Naive thymus-derived CD4-positive, alpha-beta T cell (primary cell): ENCODE measurements at regions of chr9 and their contacts with region 1.

Region 1: GRCh38 chr9:114405294-114406034 is 17.7 kb upstream of the AKNA start:
- DNase-seq: peak; percentile 56 to 84 (median 80)
- ATAC-seq: peak; percentile 97
- H3K4me3 ChIP-seq: no peak overlapping the region
- H3K4me3 Mint-ChIP-seq: no peak overlapping the region
- H3K27ac ChIP-seq: no peak overlapping the region
- H3K27ac Mint-ChIP-seq: peak overlapping the region in 6 of 9 donors; percentile 16 to 91 (median 60)
- H3K4me1 ChIP-seq: peaks cover 4 to 11% of the 10 kb centered on the region in 2 donors
- H3K4me1 Mint-ChIP-seq: peaks cover 6 to 10% (median 6%) of the 10 kb centered on the region in 7 donors
- H3K27me3 ChIP-seq: no peaks in the 10 kb centered on the region
- H3K27me3 Mint-ChIP-seq: no peaks in the 10 kb centered on the region

Region 2: GRCh38 chr9:114348906-114349482 is 56.5 kb before region 1 on chr9:
- CTCF ChIA-PET with region 1: no interaction called
- POLR2A ChIA-PET with region 1: interaction called, 978 read pairs
- intact Hi-C with region 1: no loop called
- DNase-seq: peak in 3 of 9 donors; percentile 18 to 83 (median 62)
- ATAC-seq: peak; percentile 85
- H3K4me3 ChIP-seq: no peak overlapping the region
- H3K4me3 Mint-ChIP-seq: peak overlapping the region in 8 of 10 donors; percentile 29 to 65 (median 50)
- H3K27ac ChIP-seq: peak overlapping the region; percentile 70
- H3K27ac Mint-ChIP-seq: peak overlapping the region; percentile 79 to 98 (median 90)
- H3K4me1 ChIP-seq: peaks cover 22 to 24% of the 10 kb centered on the region in 2 donors
- H3K4me1 Mint-ChIP-seq: peaks cover 23 to 60% (median 43%) of the 10 kb centered on the region in 7 donors
- H3K27me3 ChIP-seq: no peaks in the 10 kb centered on the region
- H3K27me3 Mint-ChIP-seq: no peaks in the 10 kb centered on the region

Region 3: DNA sequence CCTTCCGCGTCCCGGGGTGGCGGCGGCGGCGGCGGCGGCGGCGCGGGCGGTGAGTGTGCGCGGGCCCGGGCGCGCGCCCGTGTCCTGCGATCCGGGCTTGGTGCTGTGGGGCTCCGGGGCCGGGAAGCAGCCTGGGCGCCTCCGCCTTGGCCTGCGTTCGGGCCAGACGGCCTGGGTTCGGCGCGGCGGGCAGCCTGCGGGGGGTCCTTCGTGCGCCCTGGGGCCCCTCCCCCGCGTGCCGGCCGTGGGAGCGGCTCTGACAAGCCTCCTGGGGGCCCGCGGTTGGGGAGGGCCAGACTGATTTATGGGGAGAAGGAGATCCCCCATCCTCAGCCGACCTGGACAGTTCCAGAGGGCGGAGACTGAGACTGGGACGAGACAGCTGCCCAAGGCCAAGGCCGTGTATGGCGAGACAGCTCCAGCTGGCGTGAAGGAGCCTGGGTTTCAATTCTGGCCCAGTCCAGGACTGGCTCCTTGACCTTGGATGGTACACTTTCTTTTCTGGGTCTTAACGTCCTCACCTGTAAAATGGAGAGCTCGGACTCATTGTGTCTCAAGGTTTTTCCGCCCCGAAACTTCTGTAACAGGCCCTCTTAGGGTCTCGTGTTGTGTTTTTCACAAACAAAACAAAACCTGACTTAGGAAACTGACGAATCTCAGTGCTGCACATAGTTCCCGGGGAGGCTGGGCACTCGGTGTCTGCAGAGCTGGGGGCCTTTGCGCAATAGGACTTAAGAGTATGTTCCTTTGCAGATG is 206.2 kb after region 1 on chr9:
- CTCF ChIA-PET with region 1: interaction called, 6 read pairs
- POLR2A ChIA-PET with region 1: interaction called, 3 read pairs
- intact Hi-C with region 1: loop called in 1 of 2 experiments (anchors 1 kb)
- DNase-seq: peak in 5 of 9 donors; percentile 24 to 44 (median 31)
- ATAC-seq: peak; percentile 82
- H3K4me3 ChIP-seq: peak overlapping the region; percentile 85
- H3K4me3 Mint-ChIP-seq: peak overlapping the region; percentile 90 to 99 (median 92)
- H3K27ac ChIP-seq: peak overlapping the region; percentile 92
- H3K27ac Mint-ChIP-seq: peak overlapping the region; percentile 77 to 98 (median 95)
- H3K4me1 ChIP-seq: peaks cover 14 to 31% of the 10 kb centered on the region in 2 donors
- H3K4me1 Mint-ChIP-seq: peaks cover 34 to 63% (median 55%) of the 10 kb centered on the region in 7 donors
- H3K27me3 ChIP-seq: no peaks in the 10 kb centered on the region
- H3K27me3 Mint-ChIP-seq: no peaks in the 10 kb centered on the region

Region 4: DNA sequence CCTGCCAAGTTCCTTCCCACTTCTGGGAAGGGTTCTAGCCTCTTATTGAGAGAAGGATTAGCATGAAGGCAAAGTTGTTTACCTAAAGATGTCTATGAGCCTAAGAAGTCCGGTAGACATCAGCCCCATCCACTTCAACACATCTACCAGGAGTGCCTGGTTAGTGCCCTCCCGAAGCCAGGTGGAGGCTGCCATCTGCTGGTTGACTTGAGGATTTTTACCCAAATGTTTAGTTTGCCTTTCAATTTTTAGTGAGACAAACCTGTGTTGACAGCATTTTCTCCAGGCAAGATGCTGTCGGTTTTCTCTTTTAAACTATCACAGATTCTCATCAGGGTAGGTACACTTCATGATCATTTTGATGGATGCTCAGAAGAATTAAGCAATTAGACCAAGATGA is 608.5 kb after region 1 on chr9:
- CTCF ChIA-PET with region 1: interaction called, 15 read pairs
- POLR2A ChIA-PET with region 1: no interaction called
- intact Hi-C with region 1: loop called (anchors 1 to 2 kb)
- DNase-seq: peak; percentile 57 to 84 (median 79)
- ATAC-seq: peak; percentile 88
- H3K4me3 ChIP-seq: no peak overlapping the region
- H3K4me3 Mint-ChIP-seq: peak overlapping the region in 1 of 10 donors; percentile 24
- H3K27ac ChIP-seq: no peak overlapping the region
- H3K27ac Mint-ChIP-seq: peak overlapping the region in 2 of 9 donors; percentile 12 to 79
- H3K4me1 ChIP-seq: peaks cover 0 to 4% of the 10 kb centered on the region in 2 donors
- H3K4me1 Mint-ChIP-seq: peaks cover 5 to 59% (median 12%) of the 10 kb centered on the region in 7 donors
- H3K27me3 ChIP-seq: no peaks in the 10 kb centered on the region
- H3K27me3 Mint-ChIP-seq: peaks cover 4 to 14% (median 7%) of the 10 kb centered on the region in 5 donors

Region 5: DNA sequence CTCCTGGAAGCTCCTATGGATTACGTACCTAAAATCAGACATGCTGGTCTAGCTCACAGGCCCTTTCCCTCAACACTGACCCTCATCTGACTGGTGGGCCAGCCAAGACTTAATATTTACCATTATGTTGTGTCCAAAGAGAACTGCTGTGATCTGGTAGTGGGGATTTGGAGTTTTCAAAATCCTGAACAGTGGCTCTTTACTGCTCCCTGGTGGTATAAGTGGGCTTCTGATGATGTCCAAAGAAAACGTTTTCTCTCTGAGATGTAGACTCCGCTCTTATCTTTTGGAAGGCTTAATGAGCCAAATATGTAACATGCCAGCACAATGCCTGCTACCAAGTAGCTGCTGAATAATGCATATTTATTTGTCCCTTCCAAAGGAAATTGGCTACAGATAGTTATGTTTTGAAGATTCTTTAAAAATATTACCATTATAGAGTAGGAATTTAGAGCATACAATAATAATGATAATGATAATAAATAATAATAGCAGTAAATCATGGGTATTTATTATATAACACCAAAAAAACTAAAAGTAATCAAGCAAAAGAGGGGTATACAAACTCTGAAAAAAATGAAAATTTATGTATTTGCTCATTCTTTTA is 1119.1 kb after region 1 on chr9:
- CTCF ChIA-PET with region 1: no interaction called
- POLR2A ChIA-PET with region 1: no interaction called
- intact Hi-C with region 1: loop called (anchors 2 to 5 kb)
- DNase-seq: peak in 4 of 9 donors; percentile 4 to 16 (median 8)
- ATAC-seq: no peak
- H3K4me3 ChIP-seq: no peak overlapping the region
- H3K4me3 Mint-ChIP-seq: no peak overlapping the region
- H3K27ac ChIP-seq: no peak overlapping the region
- H3K27ac Mint-ChIP-seq: no peak overlapping the region
- H3K4me1 ChIP-seq: no peaks in the 10 kb centered on the region
- H3K4me1 Mint-ChIP-seq: no peaks in the 10 kb centered on the region
- H3K27me3 ChIP-seq: no peaks in the 10 kb centered on the region
- H3K27me3 Mint-ChIP-seq: peaks cover 12 to 35% (median 18%) of the 10 kb centered on the region in 5 donors